ENCODE measurements at regions of chr12 and their contacts with region 1.

Region 1: GRCh38 chr12:3885277-3886094 is 12.3 kb upstream of the PARP11 start:
- DNase-seq: peak; percentile 36
- ATAC-seq: no peak
- H3K4me3 ChIP-seq: no peak overlapping the region
- H3K27ac ChIP-seq: no peak overlapping the region
- H3K4me1 ChIP-seq: 0 out of 2 replicates have a peak, but pooled peaks cover 6% of the 10 kb centered on the region
- H3K27me3 ChIP-seq: no peaks in the 10 kb centered on the region; a peak in 2 of 5 replicates
- CTCF ChIP-seq: peak; percentile 78
- EP300 ChIP-seq: no peak
- POLR2A ChIP-seq: no peak
- RAD21 ChIP-seq: peak; percentile 74

Region 2: GRCh38 chr12:3951380-3952135 is 66.1 kb after region 1 on chr12:
- CTCF ChIA-PET with region 1: no interaction called
- POLR2A ChIA-PET with region 1: no interaction called
- in situ Hi-C with region 1: no loop called
- intact Hi-C with region 1: loop called (anchors 2 kb)
- DNase-seq: no peak
- ATAC-seq: no peak; the same call in 2 of the 3 replicates
- H3K4me3 ChIP-seq: no peak overlapping the region
- H3K27ac ChIP-seq: no peak overlapping the region
- H3K4me1 ChIP-seq: peaks cover 9% of the 10 kb centered on the region
- H3K27me3 ChIP-seq: peaks cover 2 to 18% of the 10 kb centered on the region in 2 experiments; a peak in 4 of 5 replicates
- CTCF ChIP-seq: no peak
- EP300 ChIP-seq: no peak
- POLR2A ChIP-seq: no peak
- RAD21 ChIP-seq: no peak

Region 3: GRCh38 chr12:3964439-3964838 is 79.0 kb after region 1 on chr12:
- CTCF ChIA-PET with region 1: no interaction called
- POLR2A ChIA-PET with region 1: no interaction called
- in situ Hi-C with region 1: no loop called
- intact Hi-C with region 1: loop called (anchors 5 kb)
- DNase-seq: peak; percentile 18
- ATAC-seq: peak; percentile 63
- H3K4me3 ChIP-seq: no peak overlapping the region
- H3K27ac ChIP-seq: no peak overlapping the region
- H3K4me1 ChIP-seq: peaks cover 42% of the 10 kb centered on the region
- H3K27me3 ChIP-seq: no peaks in the 10 kb centered on the region
- CTCF ChIP-seq: peak; percentile 74
- EP300 ChIP-seq: no peak
- POLR2A ChIP-seq: no peak
- RAD21 ChIP-seq: peak; percentile 65

Region 4: DNA sequence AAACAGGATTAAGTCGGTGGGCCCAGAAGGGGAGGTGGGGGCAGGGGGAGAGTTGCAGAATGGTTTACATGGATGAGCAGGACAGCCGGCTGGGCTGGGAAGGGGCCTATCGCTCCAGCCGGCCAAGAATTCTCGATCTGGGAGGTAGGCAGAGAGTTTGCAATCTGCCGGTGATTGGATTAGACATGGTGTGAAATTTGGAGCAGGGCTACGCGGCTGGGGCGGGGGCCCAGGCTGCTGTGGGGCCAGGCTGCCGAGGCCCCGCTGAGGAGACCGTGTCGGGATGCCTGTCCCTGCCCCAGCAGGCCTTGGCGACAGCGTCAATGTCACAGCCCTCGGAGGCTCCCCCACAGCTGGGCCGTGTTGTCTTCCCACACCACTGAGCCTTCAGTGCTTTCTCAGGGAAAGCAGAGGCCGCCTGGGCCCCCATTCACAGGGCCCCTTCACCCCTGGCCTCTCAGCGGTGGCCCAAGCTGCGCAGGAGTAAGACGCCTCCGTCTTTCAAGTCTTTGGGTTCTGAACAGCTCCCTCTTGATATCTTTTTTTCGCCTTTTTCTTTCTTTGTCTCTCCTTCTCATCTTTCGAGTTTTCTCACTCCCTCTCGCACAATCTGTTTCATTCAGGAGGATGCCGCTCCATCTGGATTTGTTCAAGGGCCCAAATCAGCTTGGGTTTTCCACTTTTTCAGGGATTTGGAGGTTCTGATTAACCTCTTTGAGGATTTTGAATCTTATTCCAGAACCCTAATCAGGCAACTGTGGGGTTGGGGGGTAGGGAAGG is 105.2 kb after region 1 on chr12:
- CTCF ChIA-PET with region 1: interaction called, 9 read pairs
- POLR2A ChIA-PET with region 1: no interaction called
- in situ Hi-C with region 1: no loop called
- intact Hi-C with region 1: loop called (anchors 2 kb)
- DNase-seq: no peak
- ATAC-seq: no peak
- H3K4me3 ChIP-seq: no peak overlapping the region
- H3K27ac ChIP-seq: no peak overlapping the region
- H3K4me1 ChIP-seq: peaks cover 29% of the 10 kb centered on the region
- H3K27me3 ChIP-seq: no peaks in the 10 kb centered on the region; a peak in 1 of 5 replicates
- CTCF ChIP-seq: no peak
- EP300 ChIP-seq: no peak
- POLR2A ChIP-seq: no peak
- RAD21 ChIP-seq: no peak

Region 5: GRCh38 chr12:4037747-4038312 is 152.3 kb after region 1 on chr12:
- CTCF ChIA-PET with region 1: interaction called, 14 read pairs
- POLR2A ChIA-PET with region 1: no interaction called
- in situ Hi-C with region 1: loop called (anchors 5 kb)
- intact Hi-C with region 1: loop called (anchors 1 kb)
- DNase-seq: peak; percentile 44
- ATAC-seq: peak; percentile 35; the same call in 1 of the 3 replicates
- H3K4me3 ChIP-seq: no peak overlapping the region
- H3K27ac ChIP-seq: no peak overlapping the region
- H3K4me1 ChIP-seq: peaks cover 48% of the 10 kb centered on the region
- H3K27me3 ChIP-seq: no peaks in the 10 kb centered on the region
- CTCF ChIP-seq: peak; percentile 78
- EP300 ChIP-seq: no peak
- POLR2A ChIP-seq: no peak
- RAD21 ChIP-seq: peak; percentile 80

Region 6: DNA sequence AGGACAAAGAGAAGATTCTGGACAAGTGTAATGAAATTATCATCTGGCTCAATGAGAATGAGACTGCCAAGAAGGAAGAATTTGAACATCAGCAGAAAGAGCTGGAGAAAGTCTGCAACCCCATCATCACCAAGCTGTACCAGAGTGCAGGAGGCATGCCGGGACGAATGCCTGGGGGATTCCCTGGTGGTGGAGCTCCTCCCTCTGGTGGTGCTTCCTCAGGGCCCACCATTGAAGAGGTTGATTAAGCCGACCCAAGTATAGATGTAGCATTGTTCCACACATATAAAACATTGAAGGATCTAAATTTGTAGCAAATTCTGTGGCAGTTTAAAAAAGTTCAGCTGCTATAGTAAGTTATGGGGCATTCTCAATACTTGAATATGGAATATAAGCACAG is 213.8 kb after region 1 on chr12:
- CTCF ChIA-PET with region 1: no interaction called
- POLR2A ChIA-PET with region 1: no interaction called
- in situ Hi-C with region 1: loop called (anchors 10 kb)
- intact Hi-C with region 1: loop called (anchors 1 kb)
- DNase-seq: no peak
- ATAC-seq: no peak
- H3K4me3 ChIP-seq: no peak overlapping the region
- H3K27ac ChIP-seq: no peak overlapping the region
- H3K4me1 ChIP-seq: no peaks in the 10 kb centered on the region
- H3K27me3 ChIP-seq: no peaks in the 10 kb centered on the region
- CTCF ChIP-seq: peak; percentile 65
- EP300 ChIP-seq: no peak
- POLR2A ChIP-seq: no peak
- RAD21 ChIP-seq: no peak

Region 7: DNA sequence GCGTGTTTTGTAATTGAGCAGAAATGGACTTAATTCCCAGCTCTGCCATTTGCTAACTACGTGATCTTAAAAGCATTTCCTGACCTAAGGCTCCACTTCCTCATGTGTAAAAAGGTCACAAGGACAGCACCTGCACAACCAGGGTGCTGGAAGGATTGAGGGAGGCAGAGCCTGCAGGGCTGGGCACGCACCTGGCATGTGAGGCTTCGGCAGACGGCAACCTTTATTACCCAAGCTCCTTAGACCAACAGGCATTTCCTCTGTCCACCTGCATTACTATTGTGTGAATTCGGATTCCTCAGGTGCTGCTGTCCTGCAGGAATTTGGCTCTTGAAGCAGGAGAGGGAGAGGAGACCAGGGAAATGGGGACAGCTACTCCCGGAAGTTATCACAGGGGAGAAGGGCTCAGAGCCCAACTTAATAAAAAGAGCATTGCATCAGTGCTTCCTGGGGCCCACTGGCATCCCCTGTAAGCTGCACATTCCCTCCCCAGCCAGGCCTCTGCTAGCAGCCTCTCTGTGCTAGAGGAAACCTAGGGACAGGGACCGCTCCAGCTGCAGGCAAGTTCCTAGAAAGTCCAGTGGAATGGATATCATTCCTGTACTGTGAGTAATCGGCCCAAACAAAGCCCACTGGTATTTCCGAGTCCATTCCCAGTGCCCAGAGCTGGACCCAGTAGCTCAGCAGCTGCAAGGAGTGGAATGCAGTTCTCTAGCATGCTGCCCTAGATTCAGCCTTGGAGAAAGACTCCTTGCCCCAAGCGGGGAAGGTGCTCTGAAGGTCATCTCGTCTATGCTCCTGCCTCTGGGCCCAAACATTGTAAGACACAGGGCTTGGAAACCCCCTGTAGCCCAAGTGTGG is 231.0 kb after region 1 on chr12:
- CTCF ChIA-PET with region 1: no interaction called
- POLR2A ChIA-PET with region 1: no interaction called
- in situ Hi-C with region 1: no loop called
- intact Hi-C with region 1: no loop called
- DNase-seq: peak; percentile 19
- ATAC-seq: peak; percentile 65
- H3K4me3 ChIP-seq: no peak overlapping the region
- H3K27ac ChIP-seq: no peak overlapping the region
- H3K4me1 ChIP-seq: no peaks in the 10 kb centered on the region
- H3K27me3 ChIP-seq: peaks cover 1 to 4% of the 10 kb centered on the region in 2 experiments; a peak in 2 of 5 replicates
- CTCF ChIP-seq: no peak
- EP300 ChIP-seq: no peak
- POLR2A ChIP-seq: no peak
- RAD21 ChIP-seq: no peak